GM10248 (cell line): ENCODE measurements at regions of chr16 and their contacts with region 1.

Region 1: GRCh38 chr16:80974649-80975376 is 31.9 kb downstream of the CMC2 start:
- DNase-seq: no peak
- CTCF ChIP-seq: peak; percentile 39

Region 2: GRCh38 chr16:80948886-80949493 is 25.8 kb before region 1 on chr16:
- CTCF ChIA-PET with region 1: interaction called, 12 read pairs
- POLR2A ChIA-PET with region 1: no interaction called
- DNase-seq: peak; percentile 53
- CTCF ChIP-seq: peak; percentile 73

Region 3: DNA sequence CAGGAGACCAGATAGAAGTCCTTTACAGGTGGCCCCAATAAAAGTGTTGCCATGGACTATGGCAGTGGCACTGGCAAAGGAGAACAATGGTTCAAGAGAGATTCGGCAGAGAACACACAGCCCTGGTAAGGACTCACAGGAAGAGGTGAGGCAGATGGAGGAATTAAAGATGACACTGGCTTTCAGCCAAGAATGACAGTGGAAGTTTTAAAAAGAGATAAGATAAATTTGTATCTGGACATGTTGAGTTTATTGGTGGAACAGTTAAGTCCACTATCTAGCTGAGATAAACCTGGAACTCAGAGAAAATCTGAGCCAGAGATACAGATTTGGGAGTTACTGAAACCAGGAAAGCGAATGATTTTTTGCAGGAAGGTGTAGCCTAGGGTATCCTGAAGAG is 11.7 kb after region 1 on chr16:
- CTCF ChIA-PET with region 1: interaction called, 12 read pairs
- POLR2A ChIA-PET with region 1: interaction called, 3 read pairs
- DNase-seq: no peak
- CTCF ChIP-seq: no peak

Region 4: DNA sequence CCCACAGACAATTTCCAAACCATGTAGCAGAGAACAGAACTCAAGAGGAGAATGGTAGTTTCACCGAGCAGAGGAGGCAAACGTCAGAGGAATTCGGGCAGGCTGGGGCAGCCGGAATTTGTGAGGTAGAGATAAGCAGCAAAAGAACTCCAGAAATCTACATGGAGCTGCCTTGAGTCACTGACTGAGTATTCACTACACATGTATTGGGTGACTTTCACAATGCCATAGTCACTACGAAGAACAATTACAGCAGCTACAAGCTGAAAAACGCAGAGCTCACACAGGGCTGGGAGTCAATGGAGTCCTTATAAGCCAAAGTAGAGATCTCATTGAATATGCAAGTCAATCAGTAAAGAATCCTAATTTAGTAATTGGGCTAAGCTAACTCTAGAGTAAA is 18.5 kb after region 1 on chr16:
- CTCF ChIA-PET with region 1: interaction called, 15 read pairs
- POLR2A ChIA-PET with region 1: interaction called, 3 read pairs
- DNase-seq: no peak
- CTCF ChIP-seq: no peak

Region 5: GRCh38 chr16:81223391-81223829 is 248.6 kb after region 1 on chr16:
- CTCF ChIA-PET with region 1: no interaction called
- POLR2A ChIA-PET with region 1: no interaction called
- DNase-seq: no peak
- CTCF ChIP-seq: no peak

Region 6: DNA sequence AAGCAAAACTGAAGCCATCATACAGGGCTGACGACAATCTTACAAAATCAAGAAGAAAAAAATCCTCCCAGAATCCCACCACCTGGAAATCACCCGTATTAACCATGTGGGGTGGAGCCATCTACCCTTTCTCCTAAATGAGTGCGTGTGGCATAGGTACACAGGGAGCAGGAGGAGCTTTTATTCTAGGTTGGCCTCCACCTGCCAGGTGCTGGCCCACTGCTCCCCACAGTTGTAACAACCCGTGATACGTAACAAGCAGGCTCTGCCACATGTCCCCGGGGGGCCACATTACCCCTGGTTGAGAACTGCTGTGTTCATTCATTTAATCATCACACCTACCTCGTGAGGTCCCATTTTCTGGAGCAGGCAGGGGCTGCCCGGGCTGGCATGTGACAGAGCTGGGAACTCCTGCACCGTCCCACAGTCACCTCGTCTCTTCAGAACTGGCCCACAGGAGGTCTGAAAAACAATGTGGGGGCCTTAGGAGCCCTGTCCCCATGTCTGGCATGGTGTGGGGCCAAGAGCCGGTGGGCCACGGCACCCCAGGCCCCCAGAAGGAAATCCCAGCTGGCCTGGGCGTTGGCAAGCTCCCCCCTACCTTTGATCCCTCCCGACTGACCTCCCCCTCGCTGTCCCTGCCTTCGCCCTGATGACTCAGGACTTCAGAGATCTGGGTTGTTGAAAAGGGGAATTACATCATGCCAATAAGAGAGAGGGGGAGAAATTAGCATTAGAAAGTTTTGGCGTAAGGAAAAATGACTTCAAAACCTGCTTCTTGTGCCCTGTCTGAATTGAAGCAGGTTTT is 482.7 kb after region 1 on chr16:
- CTCF ChIA-PET with region 1: no interaction called
- POLR2A ChIA-PET with region 1: no interaction called
- DNase-seq: no peak
- CTCF ChIP-seq: no peak